Ascending aorta (tissue), 2 donors: ENCODE measurements at regions of chr16 and their contacts with region 1.

Region 1: DNA sequence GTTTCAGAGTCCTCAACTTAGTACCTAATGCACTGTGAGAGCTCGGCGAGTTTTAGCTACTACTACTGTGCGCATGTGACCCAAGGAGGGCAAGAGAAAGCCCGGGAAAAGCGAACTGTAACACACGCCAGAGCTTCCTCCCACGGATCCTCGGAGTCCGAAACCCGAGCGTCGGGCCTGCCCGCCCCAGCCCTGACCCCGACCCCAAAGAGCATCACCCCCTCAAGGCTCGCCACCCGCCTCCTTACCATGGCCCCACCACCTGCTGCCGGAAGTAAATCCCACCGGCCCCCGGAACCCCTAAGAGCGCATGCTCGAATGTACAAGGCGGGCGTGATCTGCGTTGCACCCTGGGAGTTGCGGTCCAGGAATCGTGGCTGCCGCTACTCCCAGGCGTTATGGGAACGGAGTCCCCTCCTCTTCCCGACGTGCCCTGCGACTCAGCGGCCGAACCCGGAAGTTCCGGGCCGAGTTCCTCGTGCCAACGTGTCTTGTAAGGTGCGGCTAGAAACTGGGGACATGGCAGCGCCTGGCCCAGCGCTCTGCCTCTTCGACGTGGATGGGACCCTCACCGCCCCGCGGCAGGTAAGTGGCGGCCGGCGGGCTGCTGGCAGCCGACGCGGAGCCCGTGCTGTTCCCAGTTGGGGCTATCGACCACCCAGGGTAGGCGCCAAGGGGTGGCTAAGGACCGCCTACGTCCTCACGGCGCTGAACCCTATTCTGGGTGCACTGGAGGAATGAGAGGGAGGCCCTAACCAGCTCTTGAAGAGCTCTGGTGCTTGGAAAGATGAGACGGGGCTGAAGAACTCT is at the starts of genes PMM2 and TMEM186:
- DNase-seq: peak; percentile 85 to 98
- H3K4me3 ChIP-seq: peak within 1 kb of the TSS; percentile 92 to 93
- H3K27ac ChIP-seq: peak within 1 kb of the TSS; percentile 71 to 90
- H3K4me1 ChIP-seq: peaks cover 5 to 29% of the 10 kb centered on the region in 2 donors
- H3K27me3 ChIP-seq: no peaks in the 10 kb centered on the region
- CTCF ChIP-seq: no peak
- total RNA-seq, gene PMM2: 17.9 TPM
- total RNA-seq, gene TMEM186: 1.5 TPM

Region 2: DNA sequence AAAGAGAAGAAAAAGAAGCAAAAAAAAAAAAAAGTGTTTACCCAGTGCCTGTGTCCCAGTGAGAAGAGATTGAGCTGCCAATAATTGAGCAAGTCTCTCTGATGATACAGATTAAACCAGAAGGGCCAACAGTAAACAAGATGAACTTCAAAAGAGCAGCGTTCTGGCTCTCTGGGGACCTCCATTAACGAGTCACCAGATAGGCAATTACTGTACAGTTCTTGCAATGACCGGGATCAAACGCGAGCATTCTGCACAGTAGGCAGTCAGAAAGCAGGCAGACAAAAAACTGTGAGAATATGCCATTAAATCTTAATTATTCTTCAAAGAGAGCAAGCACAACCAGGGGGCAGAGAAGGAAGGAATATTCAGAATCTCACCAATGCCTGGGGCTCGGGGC is 833.4 kb before region 1 on chr16:
- intact Hi-C with region 1: no loop called
- DNase-seq: no peak
- H3K4me3 ChIP-seq: no peak overlapping the region
- H3K27ac ChIP-seq: no peak overlapping the region
- H3K4me1 ChIP-seq: no peaks in the 10 kb centered on the region
- H3K27me3 ChIP-seq: no peaks in the 10 kb centered on the region
- CTCF ChIP-seq: no peak

Region 3: DNA sequence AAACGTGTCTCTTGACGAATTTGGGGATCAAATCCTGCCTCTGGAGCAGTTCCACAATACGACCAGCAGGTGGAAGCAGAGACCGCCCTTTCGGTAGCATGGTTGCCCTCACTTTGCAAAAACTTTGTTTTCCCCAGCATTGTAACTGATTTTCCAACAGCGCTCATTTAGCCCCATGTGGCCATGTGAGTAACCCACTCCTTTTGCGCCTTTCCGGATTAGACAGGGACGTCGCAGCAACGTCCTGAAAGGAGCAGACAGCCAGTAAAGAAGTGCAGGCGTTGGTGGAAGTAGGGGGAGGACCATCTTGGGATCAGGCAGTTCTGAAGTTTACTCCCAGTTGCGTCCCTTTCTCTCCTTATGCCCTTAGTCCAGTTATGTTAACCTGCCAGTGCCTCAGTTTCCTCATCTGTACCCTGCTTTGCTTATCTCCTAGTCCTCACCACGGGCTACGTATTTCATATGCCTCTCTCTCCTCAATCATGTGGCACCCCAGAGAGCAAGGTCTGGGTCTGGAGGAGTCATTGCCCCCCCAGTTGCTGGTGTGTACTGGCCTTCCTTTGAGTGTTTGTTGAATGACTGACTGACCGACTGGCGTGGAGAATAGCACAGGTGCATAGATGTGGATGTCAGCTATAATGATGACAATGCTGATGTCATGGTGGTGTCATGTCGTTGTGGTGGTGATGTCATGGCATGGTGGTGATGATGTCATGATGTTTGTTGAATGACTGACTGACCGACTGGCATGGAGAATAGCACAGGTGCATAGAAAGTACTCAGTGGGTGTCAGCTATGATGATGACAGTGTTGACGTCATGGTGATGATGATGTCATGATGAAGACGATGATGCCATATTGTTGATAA is 229.6 kb before region 1 on chr16:
- intact Hi-C with region 1: loop called (anchors 2 kb)
- DNase-seq: peak; percentile 37 to 86
- H3K4me3 ChIP-seq: no peak overlapping the region
- H3K27ac ChIP-seq: no peak overlapping the region
- H3K4me1 ChIP-seq: peaks cover 0 to 11% of the 10 kb centered on the region in 2 donors
- H3K27me3 ChIP-seq: no peaks in the 10 kb centered on the region
- CTCF ChIP-seq: peak; percentile 94 to 99 (median 97)

Region 4: DNA sequence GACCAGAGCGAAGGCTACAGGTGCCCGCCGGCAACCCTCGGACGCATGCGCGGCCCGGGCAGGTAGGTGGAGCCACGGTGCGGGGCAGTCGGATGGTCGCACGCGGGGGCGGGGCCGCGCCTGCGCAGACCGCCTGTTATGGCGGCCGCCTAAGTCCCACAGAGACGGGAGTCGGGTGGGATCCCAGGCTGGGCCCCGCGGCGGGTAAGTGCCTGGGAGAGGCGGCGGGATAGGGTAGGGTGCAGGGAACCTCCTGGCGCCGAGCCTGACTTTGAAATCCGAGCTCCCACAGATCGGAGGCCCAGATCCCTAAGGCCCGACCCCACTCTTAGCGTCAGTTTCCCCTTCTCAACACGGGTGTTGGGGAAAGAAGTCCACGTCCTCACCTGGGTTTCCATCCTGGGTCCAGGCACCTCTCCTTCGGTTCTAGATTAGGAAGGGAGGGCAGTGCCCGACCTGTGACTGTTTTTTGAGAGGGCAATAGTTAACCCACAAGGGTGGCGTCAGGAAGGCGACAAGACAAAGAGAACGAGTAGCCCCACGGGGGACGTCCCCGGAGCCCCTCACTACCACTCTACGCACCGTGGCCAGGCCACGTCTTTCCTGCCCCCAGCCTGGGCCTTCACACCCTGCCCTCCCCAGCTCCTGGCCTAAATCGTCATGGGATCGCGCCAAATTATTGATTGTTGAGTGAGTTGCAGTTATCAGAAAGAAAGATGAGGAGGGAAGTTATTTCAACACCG is 175.8 kb before region 1 on chr16 and contains the start of gene METTL22:
- intact Hi-C with region 1: loop called (anchors 2 kb)
- DNase-seq: peak; percentile 50 to 91
- H3K4me3 ChIP-seq: peak within 1 kb of the TSS; percentile 89 to 98
- H3K27ac ChIP-seq: peak within 1 kb of the TSS; percentile 66 to 80
- H3K4me1 ChIP-seq: peaks cover 10 to 11% of the 10 kb centered on the region in 2 donors
- H3K27me3 ChIP-seq: no peaks in the 10 kb centered on the region
- CTCF ChIP-seq: no peak
- total RNA-seq, gene METTL22: 31.7 TPM

Region 5: DNA sequence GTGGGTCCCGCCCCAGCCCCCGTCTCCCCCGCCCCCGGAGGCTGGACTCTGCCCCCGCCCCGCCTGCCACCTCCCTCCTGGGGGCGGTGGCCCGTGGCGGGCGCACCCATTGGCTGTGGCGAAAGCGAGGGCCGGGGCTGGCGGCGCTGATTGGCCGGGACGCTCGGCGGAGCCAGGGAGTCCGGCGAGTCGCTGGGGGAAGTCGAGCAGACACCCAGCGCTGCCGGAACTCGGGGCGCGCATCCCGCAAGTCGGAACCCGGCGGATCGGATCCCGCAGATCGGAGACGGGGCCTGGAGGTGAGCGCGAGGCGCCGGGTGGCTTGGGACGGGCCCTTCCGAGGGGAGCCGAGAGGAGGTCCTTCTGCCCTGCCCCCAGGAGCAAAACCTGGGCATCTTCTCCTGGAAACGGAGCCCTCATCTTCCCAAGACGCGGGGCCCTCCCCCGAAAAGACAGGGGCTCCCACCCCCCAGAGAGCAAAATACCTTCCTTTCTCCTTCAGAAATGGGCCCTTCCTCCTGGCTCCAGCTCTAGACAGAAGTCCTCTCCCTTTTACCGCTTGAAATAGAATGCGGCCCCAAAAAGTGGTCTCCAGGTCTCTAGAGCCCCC is 123.1 kb before region 1 on chr16 and contains the start of gene ABAT:
- intact Hi-C with region 1: loop called (anchors 2 kb)
- DNase-seq: peak; percentile 55 to 94
- H3K4me3 ChIP-seq: peak within 1 kb of the TSS; percentile 75 to 84
- H3K27ac ChIP-seq: peak within 1 kb of the TSS; percentile 56 to 67
- H3K4me1 ChIP-seq: peaks cover 0 to 11% of the 10 kb centered on the region in 2 donors
- H3K27me3 ChIP-seq: no peaks in the 10 kb centered on the region
- CTCF ChIP-seq: no peak
- total RNA-seq, gene ABAT: 1.8 TPM

Region 6: DNA sequence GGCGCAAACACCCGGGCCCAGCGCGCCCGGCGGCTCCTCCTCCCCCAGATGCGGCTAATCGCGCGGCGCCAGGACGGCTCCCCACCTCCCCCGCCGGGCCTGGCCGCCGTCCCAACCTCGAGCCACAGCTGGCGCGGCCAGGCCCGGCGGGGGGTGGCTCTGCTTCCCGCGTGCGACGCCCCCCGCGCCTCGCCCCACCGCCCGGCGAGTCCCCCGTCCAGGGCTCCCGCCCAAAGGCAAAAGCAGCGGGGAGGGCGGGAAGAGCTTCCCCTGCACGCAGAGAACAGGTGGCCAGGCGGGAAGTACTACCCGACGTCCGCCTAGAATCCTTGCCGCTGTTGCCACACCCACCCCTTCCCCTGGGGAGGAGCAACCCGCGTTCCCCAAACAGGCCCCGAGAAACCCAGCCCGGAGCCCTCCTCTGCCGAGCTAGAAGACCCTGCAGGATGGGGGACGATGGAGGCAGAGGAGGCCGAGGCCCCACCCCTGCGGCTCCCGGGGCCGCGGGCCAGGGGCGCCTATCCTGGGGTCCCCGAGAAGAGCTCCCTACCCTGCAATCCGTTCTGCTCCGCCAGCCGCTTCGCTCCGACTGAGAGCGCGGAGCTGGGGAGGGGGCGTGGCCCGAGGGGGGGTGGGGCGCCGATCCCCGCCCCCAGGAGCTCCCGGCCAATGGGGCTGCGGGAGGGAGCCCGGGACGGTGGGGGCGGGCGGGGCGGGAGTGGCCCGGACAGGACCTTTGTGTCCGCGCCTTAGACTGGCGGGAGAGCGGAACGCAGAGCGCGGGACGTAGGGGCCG is 71.0 kb after region 1 on chr16 and contains the start of gene CARHSP1:
- intact Hi-C with region 1: loop called (anchors 1 kb)
- DNase-seq: peak; percentile 61 to 91
- H3K4me3 ChIP-seq: peak within 1 kb of the TSS; percentile 80 to 92
- H3K27ac ChIP-seq: peak within 1 kb of the TSS; percentile 55 to 91
- H3K4me1 ChIP-seq: peaks cover 11 to 46% of the 10 kb centered on the region in 2 donors
- H3K27me3 ChIP-seq: no peaks in the 10 kb centered on the region
- CTCF ChIP-seq: no peak
- total RNA-seq, gene CARHSP1: 151 TPM

Region 7: GRCh38 chr16:8885674-8886592 is 88.4 kb after region 1 on chr16:
- intact Hi-C with region 1: loop called (anchors 5 kb)
- DNase-seq: no peak
- H3K4me3 ChIP-seq: no peak overlapping the region
- H3K27ac ChIP-seq: no peak overlapping the region
- H3K4me1 ChIP-seq: peaks cover 0 to 7% of the 10 kb centered on the region in 2 donors
- H3K27me3 ChIP-seq: no peaks in the 10 kb centered on the region
- CTCF ChIP-seq: no peak

Region 8: DNA sequence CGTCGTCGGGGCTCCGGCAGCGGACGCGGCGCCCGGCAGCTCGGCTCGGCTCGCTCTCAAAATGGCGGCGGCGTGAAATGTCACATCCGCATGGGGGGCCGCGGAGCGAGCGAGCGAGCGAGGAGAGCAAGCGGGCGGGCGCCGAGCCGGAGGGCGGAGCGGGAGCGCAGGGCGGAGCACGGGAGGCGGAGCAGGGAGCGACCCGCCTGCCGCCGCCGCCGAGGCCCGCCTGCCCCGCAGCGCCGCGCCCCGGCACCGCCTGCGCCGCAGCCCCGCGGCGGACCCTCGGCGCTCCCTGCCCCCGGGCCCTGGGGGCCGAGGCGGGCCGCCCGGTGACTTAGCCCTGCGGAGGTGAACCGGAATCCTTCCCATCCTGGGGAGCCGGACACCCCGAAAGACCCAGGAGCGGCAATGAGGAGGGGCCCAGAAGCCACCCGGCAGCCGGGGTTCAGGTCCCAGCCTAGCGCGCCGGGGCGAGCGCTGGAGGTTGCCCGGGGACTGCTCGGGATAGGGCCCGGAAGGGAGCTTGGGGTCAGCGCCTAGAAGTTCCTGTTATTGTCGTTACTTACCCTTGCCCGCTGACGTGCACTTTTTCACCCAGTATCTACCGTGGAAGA is 166.4 kb after region 1 on chr16 and contains the start of gene USP7:
- intact Hi-C with region 1: loop called (anchors 5 kb)
- DNase-seq: peak; percentile 51 to 95
- H3K4me3 ChIP-seq: peak within 1 kb of the TSS; percentile 75 to 84
- H3K27ac ChIP-seq: peak within 1 kb of the TSS; percentile 75 to 78
- H3K4me1 ChIP-seq: peaks cover 15 to 31% of the 10 kb centered on the region in 2 donors
- H3K27me3 ChIP-seq: no peaks in the 10 kb centered on the region
- CTCF ChIP-seq: no peak
- total RNA-seq, gene USP7: 55.3 TPM